Left lung (tissue), 14 donors: ENCODE measurements at regions of chr15 and their contacts with region 1.

Region 1: DNA sequence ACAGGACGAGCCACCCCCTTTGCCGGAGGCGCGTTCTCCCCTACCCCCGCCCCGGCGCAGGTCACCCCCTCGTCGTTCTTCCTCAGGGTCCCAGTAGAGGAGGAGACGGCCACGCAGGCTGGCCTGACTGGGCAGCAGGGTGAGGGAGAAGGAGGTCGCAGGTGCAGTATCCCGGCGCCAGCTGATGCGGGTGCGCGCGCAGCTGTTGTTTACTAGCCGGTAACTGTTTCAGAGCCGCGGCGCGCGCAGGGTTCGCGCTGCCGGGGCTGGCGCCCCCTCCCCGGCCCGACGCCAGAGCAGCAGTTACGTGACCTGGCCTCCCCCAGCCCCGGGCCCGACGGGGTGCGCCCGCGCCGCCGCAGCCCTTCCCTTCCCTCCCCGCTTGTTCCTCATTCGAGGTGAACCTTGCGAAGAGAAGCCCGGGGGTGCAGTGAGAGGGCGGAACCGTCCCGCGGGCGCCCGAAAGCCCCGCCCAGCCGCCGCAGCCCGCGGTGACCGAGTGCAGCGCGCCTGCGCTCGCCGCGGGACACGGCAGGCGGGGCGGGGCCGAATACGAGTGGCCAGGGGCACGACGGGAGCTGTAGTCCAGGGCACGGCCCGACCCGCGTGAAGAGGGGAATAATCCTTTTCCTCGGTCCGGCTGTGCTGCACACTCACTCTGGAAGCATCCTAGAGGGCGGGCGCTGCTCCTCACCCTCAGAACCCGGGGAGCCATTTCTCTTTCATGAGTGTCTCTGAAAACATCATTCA is at the start of gene SLC12A6:
- DNase-seq: peak; percentile 81 to 99 (median 92)
- ATAC-seq: peak; percentile 96
- H3K4me3 ChIP-seq: peak within 1 kb of the TSS; percentile 85 to 88
- H3K27ac ChIP-seq: peak within 1 kb of the TSS; percentile 87 to 98
- H3K4me1 ChIP-seq: peaks cover 16 to 80% of the 10 kb centered on the region in 2 donors
- H3K27me3 ChIP-seq: no peaks in the 10 kb centered on the region
- CTCF ChIP-seq: no peak
- polyA plus RNA-seq, gene SLC12A6: 25.9 to 37.3 (median 29.7) TPM

Region 2: DNA sequence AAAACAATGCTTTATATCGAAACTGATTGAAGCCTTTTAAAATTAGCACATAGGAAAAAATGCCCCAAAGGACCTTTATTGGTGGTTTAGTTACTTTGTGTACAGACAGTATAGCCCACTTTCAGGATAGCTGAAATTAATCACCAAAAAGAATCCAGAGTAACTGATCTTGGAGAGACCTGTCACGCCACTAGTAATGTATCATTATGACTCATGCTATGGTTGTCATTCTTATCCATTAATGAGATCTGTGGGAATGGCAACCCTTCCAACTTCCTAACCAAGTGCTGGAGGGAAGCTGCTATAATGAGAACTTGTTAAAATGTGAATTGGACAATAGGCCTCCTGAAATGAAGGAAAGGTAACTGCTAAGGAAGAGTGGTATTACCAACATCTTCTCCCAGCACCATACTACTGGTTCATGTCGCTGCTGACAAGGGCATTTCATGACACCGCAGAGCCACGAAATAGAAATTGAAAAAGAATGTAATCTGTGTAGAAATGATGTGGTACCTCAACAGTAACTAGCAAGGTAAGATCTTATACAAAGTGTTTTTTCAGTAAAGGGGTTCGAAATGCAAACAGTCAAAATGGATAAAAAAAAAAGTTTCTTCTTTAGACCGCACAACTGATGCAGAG is 120.0 kb before region 1 on chr15:
- intact Hi-C with region 1: no loop called
- DNase-seq: no peak
- ATAC-seq: no peak
- H3K4me3 ChIP-seq: no peak overlapping the region
- H3K27ac ChIP-seq: no peak overlapping the region
- H3K4me1 ChIP-seq: no peaks in the 10 kb centered on the region
- H3K27me3 ChIP-seq: no peaks in the 10 kb centered on the region
- CTCF ChIP-seq: no peak

Region 3: GRCh38 chr15:34241372-34242330 is 96.1 kb before region 1 on chr15:
- intact Hi-C with region 1: loop called in 1 of 2 experiments (anchors 10 kb)
- DNase-seq: peak in 1 of 4 donors; percentile 26
- ATAC-seq: peak; percentile 82
- H3K4me3 ChIP-seq: no peak overlapping the region
- H3K27ac ChIP-seq: no peak overlapping the region
- H3K4me1 ChIP-seq: no peaks in the 10 kb centered on the region
- H3K27me3 ChIP-seq: no peaks in the 10 kb centered on the region
- CTCF ChIP-seq: peak; percentile 72 to 77